Activated CD4-positive, alpha-beta memory T cell treated with anti-CD3 and anti-CD28 coated beads, Interleukin-2, amount 10 ng/mL, durations not matched to agents 7 days and 5 days (primary cell): ENCODE measurements at regions of chr18 and their contacts with region 1.

Region 1: DNA sequence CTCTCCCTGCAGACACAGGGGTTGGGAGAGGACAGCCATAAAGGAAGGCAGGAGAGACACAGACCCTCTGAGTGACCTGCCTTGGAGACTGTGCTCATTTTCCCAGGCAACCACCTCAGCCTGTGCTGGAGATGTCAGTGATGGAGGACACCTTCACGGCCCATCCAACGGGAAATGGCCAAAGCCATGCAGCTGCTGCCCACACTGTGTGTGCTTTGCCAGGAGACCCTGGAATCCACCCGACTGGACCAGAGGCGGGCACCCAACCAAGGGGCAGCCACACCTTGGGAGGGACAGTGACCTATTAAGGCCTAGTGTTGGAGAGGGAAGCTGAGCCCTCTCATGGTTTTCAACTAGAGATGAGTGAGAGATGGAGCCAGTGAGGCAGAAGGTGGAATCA is 192.5 kb downstream of the SMAD2 start:
- DNase-seq: no peak
- H3K4me3 Mint-ChIP-seq: no peak overlapping the region
- H3K27ac Mint-ChIP-seq: no peak overlapping the region
- H3K4me1 Mint-ChIP-seq: no peaks in the 10 kb centered on the region
- H3K27me3 Mint-ChIP-seq: peaks cover 27% of the 10 kb centered on the region

Region 2: GRCh38 chr18:47204908-47205522 is 532.9 kb before region 1 on chr18:
- CTCF ChIA-PET with region 1: no interaction called
- POLR2A ChIA-PET with region 1: no interaction called
- DNase-seq: peak; percentile 29
- H3K4me3 Mint-ChIP-seq: no peak overlapping the region
- H3K27ac Mint-ChIP-seq: no peak overlapping the region
- H3K4me1 Mint-ChIP-seq: no peaks in the 10 kb centered on the region
- H3K27me3 Mint-ChIP-seq: peaks cover 16% of the 10 kb centered on the region

Region 3: DNA sequence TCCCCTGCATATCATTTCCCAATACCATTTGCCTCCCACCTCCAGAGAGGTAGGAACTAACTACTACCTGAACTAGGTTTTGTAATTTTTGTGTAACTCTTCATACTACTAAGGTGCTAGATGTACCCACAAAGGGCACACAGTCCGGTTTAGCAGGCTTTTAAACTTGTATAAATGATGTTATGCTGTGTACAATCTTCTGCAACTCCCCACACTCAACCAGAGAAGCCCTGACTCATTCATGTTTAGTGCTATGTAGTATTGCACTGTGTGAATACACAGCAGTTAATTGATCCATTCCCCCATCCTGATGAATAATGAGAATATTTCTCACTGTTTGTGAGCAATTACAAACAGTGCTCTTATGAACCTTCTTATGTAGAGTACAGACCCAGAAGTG is 93.1 kb before region 1 on chr18:
- CTCF ChIA-PET with region 1: no interaction called
- POLR2A ChIA-PET with region 1: no interaction called
- DNase-seq: no peak
- H3K4me3 Mint-ChIP-seq: no peak overlapping the region
- H3K27ac Mint-ChIP-seq: no peak overlapping the region
- H3K4me1 Mint-ChIP-seq: no peaks in the 10 kb centered on the region
- H3K27me3 Mint-ChIP-seq: no peaks in the 10 kb centered on the region

Region 4: GRCh38 chr18:47748847-47749599 is 11.1 kb after region 1 on chr18:
- CTCF ChIA-PET with region 1: interaction called, 26 read pairs
- POLR2A ChIA-PET with region 1: no interaction called
- DNase-seq: peak; percentile 82
- H3K4me3 Mint-ChIP-seq: no peak overlapping the region
- H3K27ac Mint-ChIP-seq: no peak overlapping the region
- H3K4me1 Mint-ChIP-seq: peaks cover 3% of the 10 kb centered on the region
- H3K27me3 Mint-ChIP-seq: peaks cover 6% of the 10 kb centered on the region

Region 5: DNA sequence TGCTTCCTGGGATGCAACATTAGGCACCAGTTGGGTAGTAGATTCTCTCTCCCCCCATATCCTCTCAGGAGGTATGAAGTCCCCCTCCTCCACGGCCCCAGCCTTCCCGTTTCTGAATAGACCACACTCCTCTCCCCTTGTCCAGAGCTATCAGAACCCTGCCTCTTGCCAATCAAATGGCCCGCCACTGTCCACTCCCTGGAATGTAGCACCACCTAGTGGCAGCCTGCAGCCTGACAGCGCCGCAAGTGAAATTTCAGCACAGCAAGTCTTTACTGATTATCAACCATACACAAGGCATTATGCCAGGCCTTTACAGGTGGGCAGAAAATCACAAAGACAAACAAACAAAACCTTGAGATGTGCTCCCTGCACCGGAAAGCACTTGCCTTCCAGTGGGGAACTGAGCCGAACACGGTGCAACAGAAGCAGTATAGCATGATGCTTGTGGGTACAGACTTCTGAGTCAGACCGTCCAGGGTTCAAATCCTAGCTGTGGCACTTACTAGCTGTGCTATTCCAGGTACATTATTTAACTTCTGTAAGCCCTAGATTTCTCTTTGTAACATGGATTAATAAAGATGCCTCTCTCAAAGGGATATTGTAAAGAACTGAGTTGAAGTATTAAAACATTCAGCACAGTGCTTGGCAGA is 18.5 kb after region 1 on chr18:
- CTCF ChIA-PET with region 1: interaction called, 17 read pairs
- POLR2A ChIA-PET with region 1: no interaction called
- DNase-seq: peak; percentile 63
- H3K4me3 Mint-ChIP-seq: no peak overlapping the region
- H3K27ac Mint-ChIP-seq: no peak overlapping the region
- H3K4me1 Mint-ChIP-seq: no peaks in the 10 kb centered on the region
- H3K27me3 Mint-ChIP-seq: peaks cover 14% of the 10 kb centered on the region